ENCODE measurements at regions of chr7 and their contacts with region 1.

Region 1: GRCh38 chr7:143380255-143380645 is 895 bp upstream of the ZYX start:
- DNase-seq: peak; percentile 79 to 95 (median 88)
- ATAC-seq: peak; percentile 58
- H3K4me3 ChIP-seq: peak overlapping the region; percentile 87
- H3K4me3 Mint-ChIP-seq: peak overlapping the region; percentile 95
- H3K27ac ChIP-seq: peak overlapping the region; percentile 91 to 97
- H3K27ac Mint-ChIP-seq: peak overlapping the region; percentile 98
- H3K4me1 ChIP-seq: peaks cover 77% of the 10 kb centered on the region
- H3K4me1 Mint-ChIP-seq: peaks cover 42% of the 10 kb centered on the region
- H3K27me3 ChIP-seq: no peaks in the 10 kb centered on the region
- H3K27me3 Mint-ChIP-seq: no peaks in the 10 kb centered on the region
- CTCF ChIP-seq: peak; percentile 79

Region 2: DNA sequence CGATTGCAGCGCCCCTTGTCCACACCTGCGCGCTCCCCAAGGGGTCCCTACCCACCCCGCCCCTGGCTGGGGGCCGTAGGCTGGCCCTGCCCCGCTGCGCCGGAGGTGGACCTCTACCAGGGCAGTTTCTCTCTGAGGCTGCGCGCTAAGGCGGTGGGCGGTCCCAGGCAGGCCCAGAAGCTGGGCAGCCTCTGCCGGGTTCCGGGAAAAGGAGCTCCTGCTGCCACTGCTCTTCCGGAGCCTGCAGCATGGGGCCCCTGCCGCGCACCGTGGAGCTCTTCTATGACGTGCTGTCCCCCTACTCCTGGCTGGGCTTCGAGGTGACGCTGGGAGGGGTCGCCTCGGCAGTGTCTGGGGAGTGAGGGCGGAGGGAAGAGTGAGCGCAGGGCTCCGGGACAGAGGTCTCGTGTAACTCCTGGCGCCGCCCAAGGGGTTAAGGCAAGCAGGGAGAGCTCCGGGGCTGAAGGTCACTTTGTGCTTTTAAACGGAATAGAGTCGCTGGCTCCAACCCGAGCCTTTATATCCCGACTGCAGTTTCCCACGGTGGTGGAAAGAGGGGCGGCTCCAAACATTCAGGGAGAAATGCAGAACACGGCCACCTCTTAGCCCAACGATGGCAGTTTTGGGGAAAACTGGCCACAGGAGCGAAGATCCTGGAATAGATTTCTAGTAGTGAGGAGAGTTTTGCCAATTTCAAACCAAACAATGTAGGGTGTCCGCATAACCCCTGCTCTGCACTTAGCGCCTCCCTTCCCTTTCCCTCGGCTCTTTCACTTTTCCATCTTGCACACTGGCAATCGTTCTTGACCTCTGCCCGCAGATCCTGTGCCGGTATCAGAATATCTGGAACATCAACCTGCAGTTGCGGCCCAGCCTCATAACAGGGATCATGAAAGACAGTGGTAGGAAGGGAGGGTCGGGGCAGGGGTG is 116.7 kb before region 1 on chr7 and contains the start of gene GSTK1:
- CTCF ChIA-PET with region 1: interaction called, 5 read pairs
- POLR2A ChIA-PET with region 1: interaction called, 12 read pairs
- intact Hi-C with region 1: no loop called
- DNase-seq: peak; percentile 53 to 87 (median 77)
- ATAC-seq: peak; percentile 96
- H3K4me3 ChIP-seq: peak within 1 kb of the TSS; percentile 98
- H3K4me3 Mint-ChIP-seq: peak within 1 kb of the TSS; percentile 98
- H3K27ac ChIP-seq: peak within 1 kb of the TSS; percentile 74
- H3K27ac Mint-ChIP-seq: peak within 1 kb of the TSS; percentile 95
- H3K4me1 ChIP-seq: peaks cover 49% of the 10 kb centered on the region
- H3K4me1 Mint-ChIP-seq: peaks cover 64% of the 10 kb centered on the region
- H3K27me3 ChIP-seq: no peaks in the 10 kb centered on the region
- H3K27me3 Mint-ChIP-seq: no peaks in the 10 kb centered on the region
- CTCF ChIP-seq: no peak
- total RNA-seq, gene GSTK1: 245 to 259 TPM

Region 3: GRCh38 chr7:143305423-143306070 is 74.7 kb before region 1 on chr7:
- CTCF ChIA-PET with region 1: interaction called, 11 read pairs
- POLR2A ChIA-PET with region 1: interaction called, 8 read pairs
- intact Hi-C with region 1: loop called in 1 of 2 experiments (anchors 5 kb)
- DNase-seq: peak; percentile 53 to 81 (median 65)
- ATAC-seq: peak; percentile 74
- H3K4me3 ChIP-seq: no peak overlapping the region
- H3K4me3 Mint-ChIP-seq: no peak overlapping the region
- H3K27ac ChIP-seq: no peak overlapping the region
- H3K27ac Mint-ChIP-seq: peak overlapping the region; percentile 5
- H3K4me1 ChIP-seq: peaks cover 17% of the 10 kb centered on the region
- H3K4me1 Mint-ChIP-seq: peaks cover 25% of the 10 kb centered on the region
- H3K27me3 ChIP-seq: no peaks in the 10 kb centered on the region
- H3K27me3 Mint-ChIP-seq: no peaks in the 10 kb centered on the region
- CTCF ChIP-seq: peak; percentile 64

Region 4: GRCh38 chr7:143351060-143351459 is 29.2 kb before region 1 on chr7:
- CTCF ChIA-PET with region 1: no interaction called
- POLR2A ChIA-PET with region 1: no interaction called
- intact Hi-C with region 1: no loop called
- DNase-seq: no peak
- ATAC-seq: no peak
- H3K4me3 ChIP-seq: no peak overlapping the region
- H3K4me3 Mint-ChIP-seq: no peak overlapping the region
- H3K27ac ChIP-seq: no peak overlapping the region
- H3K27ac Mint-ChIP-seq: no peak overlapping the region
- H3K4me1 ChIP-seq: no peaks in the 10 kb centered on the region
- H3K4me1 Mint-ChIP-seq: no peaks in the 10 kb centered on the region
- H3K27me3 ChIP-seq: no peaks in the 10 kb centered on the region
- H3K27me3 Mint-ChIP-seq: no peaks in the 10 kb centered on the region
- CTCF ChIP-seq: no peak

Region 5: DNA sequence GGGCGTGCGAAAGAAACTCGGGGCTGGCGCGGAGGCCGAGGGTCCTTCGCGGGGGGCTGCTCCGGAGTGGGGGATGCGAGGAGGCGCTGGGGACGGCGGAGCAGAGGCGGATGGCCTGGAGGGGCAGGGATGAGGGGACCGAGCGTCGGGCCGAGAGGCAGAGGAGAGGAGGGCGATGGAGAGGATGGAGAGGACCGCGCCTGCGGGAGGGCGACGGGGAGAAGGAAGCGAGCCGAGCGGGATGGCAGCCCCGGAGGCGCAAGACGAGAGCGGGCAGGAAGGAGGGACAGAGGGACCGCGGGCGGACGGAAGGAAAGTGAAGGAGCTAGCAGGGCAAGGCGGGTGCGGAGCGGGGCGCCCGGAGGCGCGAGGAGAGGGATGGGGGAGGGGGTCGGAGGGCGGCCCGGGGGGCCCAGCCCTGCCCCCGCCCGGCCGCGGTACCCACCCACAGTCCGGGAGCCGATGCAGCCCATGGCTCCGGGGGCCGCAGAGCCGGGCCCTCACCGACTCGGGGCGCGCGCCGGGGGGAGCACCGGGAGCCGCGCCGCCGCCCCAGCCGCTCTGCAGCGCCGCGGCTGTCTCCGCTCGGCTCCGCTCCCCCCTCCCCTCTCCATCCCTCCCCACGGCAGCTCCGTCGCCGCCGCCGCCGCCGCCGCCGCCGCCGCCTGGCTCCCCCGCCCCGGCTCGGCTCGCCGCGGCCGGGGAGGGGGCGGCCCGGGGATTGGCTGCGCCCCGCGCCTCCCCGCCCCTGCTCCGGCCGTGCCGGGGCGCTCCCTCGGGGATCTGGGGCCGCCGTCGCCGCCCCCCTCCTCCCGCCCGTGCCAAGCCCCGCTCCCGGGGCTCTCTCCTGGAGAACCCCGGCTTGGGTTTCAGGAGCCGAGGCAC is 17.9 kb before region 1 on chr7 and contains the start of gene FAM131B:
- CTCF ChIA-PET with region 1: interaction called, 9 read pairs
- POLR2A ChIA-PET with region 1: interaction called, 5 read pairs
- intact Hi-C with region 1: loop called in 1 of 2 experiments (anchors 2 kb)
- DNase-seq: peak in 8 of 14 experiments; percentile 20 to 76 (median 50)
- ATAC-seq: peak; percentile 81
- H3K4me3 ChIP-seq: peak within 1 kb of the TSS; percentile 72
- H3K4me3 Mint-ChIP-seq: peak within 1 kb of the TSS; percentile 85
- H3K27ac ChIP-seq: no peak within 1 kb of the TSS
- H3K27ac Mint-ChIP-seq: no peak within 1 kb of the TSS
- H3K4me1 ChIP-seq: peaks cover 15% of the 10 kb centered on the region
- H3K4me1 Mint-ChIP-seq: peaks cover 10% of the 10 kb centered on the region
- H3K27me3 ChIP-seq: peaks cover 21 to 27% of the 10 kb centered on the region in 2 experiments
- H3K27me3 Mint-ChIP-seq: peaks cover 54% of the 10 kb centered on the region
- CTCF ChIP-seq: no peak
- total RNA-seq, gene FAM131B: 0.14 TPM in 1 of 2 experiments, not detected in the other

Measured in CD4-positive, alpha-beta T cell (primary cell).